ENCODE measurements at regions of chr12 and their contacts with region 1.

Region 1: DNA sequence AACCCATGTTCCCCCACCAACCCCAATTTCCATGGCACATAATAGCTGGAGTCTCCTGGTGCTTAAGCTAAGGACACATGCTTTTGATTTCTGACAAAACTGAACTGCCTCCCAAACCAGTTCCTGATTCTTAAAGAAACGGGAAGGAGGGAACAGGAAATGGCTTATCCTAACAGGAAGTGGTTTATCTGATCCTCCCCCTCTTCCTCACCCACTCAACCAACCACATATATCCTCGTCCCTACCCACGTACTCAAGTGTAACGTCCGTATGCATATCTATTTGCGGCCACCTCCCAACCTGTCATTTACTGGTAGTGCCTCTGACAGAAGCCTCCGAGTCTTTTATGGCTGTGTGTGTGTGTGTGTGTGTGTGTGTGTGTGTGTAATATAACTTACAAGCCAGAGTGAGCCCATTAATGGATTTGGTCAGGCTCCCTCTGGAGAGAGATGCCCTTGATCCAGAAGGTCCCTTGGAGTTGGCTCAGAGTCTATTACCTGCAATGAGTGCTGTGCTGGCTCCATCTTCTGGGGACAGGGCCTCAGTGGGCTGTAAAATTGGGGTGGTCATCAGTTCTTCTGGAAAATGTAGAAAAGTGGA is 7.7 kb downstream of the DAZAP2 start:
- DNase-seq: peak; percentile 84 to 89 (median 86)
- H3K4me3 ChIP-seq: peak overlapping the region; percentile 1 to 68 (median 24)
- H3K4me3 Mint-ChIP-seq: peak overlapping the region; percentile 39 to 77
- H3K27ac ChIP-seq: peak overlapping the region; percentile 29 to 74
- H3K27ac Mint-ChIP-seq: peak overlapping the region; percentile 90 to 98 (median 97)
- H3K4me1 ChIP-seq: peaks cover 86 to 88% of the 10 kb centered on the region in 2 donors
- H3K4me1 Mint-ChIP-seq: peaks cover 70% of the 10 kb centered on the region
- H3K27me3 ChIP-seq: no peaks in the 10 kb centered on the region
- H3K27me3 Mint-ChIP-seq: peaks cover 0 to 2% (median 0%) of the 10 kb centered on the region in 3 donors
- CTCF ChIP-seq: no peak

Region 2: GRCh38 chr12:51047655-51048540 is 198.5 kb before region 1 on chr12 and contains the start of gene LETMD1:
- intact Hi-C with region 1: loop called in 1 of 2 experiments (anchors 10 kb)
- DNase-seq: peak; percentile 94 to 98 (median 97)
- H3K4me3 ChIP-seq: peak within 1 kb of the TSS; percentile 67 to 88 (median 85)
- H3K4me3 Mint-ChIP-seq: peak within 1 kb of the TSS; percentile 93 to 98
- H3K27ac ChIP-seq: peak within 1 kb of the TSS; percentile 90
- H3K27ac Mint-ChIP-seq: peak within 1 kb of the TSS; percentile 87 to 97 (median 94)
- H3K4me1 ChIP-seq: peaks cover 18 to 22% of the 10 kb centered on the region in 2 donors
- H3K4me1 Mint-ChIP-seq: peaks cover 19% of the 10 kb centered on the region
- H3K27me3 ChIP-seq: no peaks in the 10 kb centered on the region
- H3K27me3 Mint-ChIP-seq: peaks cover 0 to 5% (median 0%) of the 10 kb centered on the region in 3 donors
- CTCF ChIP-seq: peak; percentile 92
- polyA plus RNA-seq, gene LETMD1: 13.2 to 95.6 (median 16.8) TPM

Region 3: GRCh38 chr12:51083126-51083833 is 163.1 kb before region 1 on chr12 and contains the start of gene CSRNP2:
- intact Hi-C with region 1: loop called in 1 of 2 experiments (anchors 10 kb)
- DNase-seq: peak; percentile 90 to 92 (median 91)
- H3K4me3 ChIP-seq: peak within 1 kb of the TSS; percentile 72 to 97 (median 74)
- H3K4me3 Mint-ChIP-seq: peak within 1 kb of the TSS; percentile 98 to 100
- H3K27ac ChIP-seq: peak within 1 kb of the TSS in 1 of 2 donors; percentile 74
- H3K27ac Mint-ChIP-seq: peak within 1 kb of the TSS; percentile 45 to 90 (median 82)
- H3K4me1 ChIP-seq: peaks cover 26 to 38% of the 10 kb centered on the region in 2 donors
- H3K4me1 Mint-ChIP-seq: peaks cover 33% of the 10 kb centered on the region
- H3K27me3 ChIP-seq: no peaks in the 10 kb centered on the region
- H3K27me3 Mint-ChIP-seq: no peaks in the 10 kb centered on the region
- CTCF ChIP-seq: peak; percentile 9
- polyA plus RNA-seq, gene CSRNP2: 1.7 to 8.0 (median 2.6) TPM

Region 4: DNA sequence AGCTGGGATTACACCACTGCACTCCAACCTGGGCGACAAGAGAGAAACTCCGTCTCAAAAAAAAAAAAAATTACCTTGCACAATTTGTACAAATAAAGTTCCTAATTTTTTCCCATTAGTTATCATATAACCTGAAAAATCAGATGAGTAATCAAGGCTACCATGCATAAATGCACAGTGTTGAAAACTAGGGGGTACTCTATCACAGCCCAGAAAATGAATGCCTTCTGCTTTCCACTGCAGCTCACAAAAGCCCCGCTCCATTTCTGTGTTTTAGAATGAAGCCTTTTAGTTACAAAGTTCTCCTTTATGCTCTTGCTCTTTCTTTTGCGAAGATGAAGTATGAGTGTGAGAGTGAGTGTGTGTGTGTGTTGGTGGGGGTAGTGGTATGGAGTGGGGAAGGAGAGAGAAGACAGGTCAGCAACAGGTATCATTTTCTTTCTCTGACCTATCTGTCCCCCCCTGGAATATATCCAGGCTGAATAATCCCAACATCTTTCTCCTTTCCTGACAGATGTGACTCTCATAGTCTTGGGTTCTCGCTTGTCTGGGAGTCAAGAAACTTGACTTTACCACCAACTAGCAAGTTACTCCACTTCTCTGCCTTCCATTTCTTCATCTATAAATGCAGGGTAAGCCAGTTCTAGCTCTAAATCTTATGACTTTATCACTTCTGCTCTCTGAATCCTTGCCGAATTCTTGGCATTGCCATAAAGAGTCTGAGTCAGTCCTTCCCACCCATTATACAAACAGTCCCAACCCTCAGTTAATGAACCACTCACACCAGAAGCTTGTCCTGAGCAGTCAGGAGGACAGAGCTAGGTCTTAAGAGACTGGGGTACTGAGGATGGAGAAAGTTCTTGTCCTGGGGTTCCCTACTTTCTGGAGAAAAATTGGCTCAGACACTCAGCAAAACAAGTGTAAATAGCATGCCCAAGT is 61.6 kb after region 1 on chr12:
- intact Hi-C with region 1: no loop called
- DNase-seq: no peak
- H3K4me3 ChIP-seq: no peak overlapping the region
- H3K4me3 Mint-ChIP-seq: no peak overlapping the region
- H3K27ac ChIP-seq: peak overlapping the region in 1 of 2 donors; percentile 68
- H3K27ac Mint-ChIP-seq: peak overlapping the region in 6 of 7 donors; percentile 10 to 87 (median 66)
- H3K4me1 ChIP-seq: no peaks in the 10 kb centered on the region
- H3K4me1 Mint-ChIP-seq: peaks cover 35% of the 10 kb centered on the region
- H3K27me3 ChIP-seq: no peaks in the 10 kb centered on the region
- H3K27me3 Mint-ChIP-seq: no peaks in the 10 kb centered on the region
- CTCF ChIP-seq: no peak